Spleen (tissue), 13 donors: ENCODE measurements at regions of chr14 and their contacts with region 1.

Region 1: GRCh38 chr14:62126879-62127478 is 364.8 kb downstream of the SNAPC1 start:
- DNase-seq: no peak
- H3K4me3 ChIP-seq: no peak overlapping the region
- H3K27ac ChIP-seq: no peak overlapping the region
- H3K4me1 ChIP-seq: peaks cover 0 to 19% (median 0%) of the 10 kb centered on the region in 6 donors
- H3K27me3 ChIP-seq: peaks cover 0 to 8% (median 0%) of the 10 kb centered on the region in 7 donors
- CTCF ChIP-seq: peak; percentile 59 to 83 (median 75)
- POLR2A ChIP-seq: no peak

Region 2: GRCh38 chr14:61710853-61711817 is 415.8 kb before region 1 on chr14:
- intact Hi-C with region 1: no loop called
- DNase-seq: peak; percentile 69
- H3K4me3 ChIP-seq: peak overlapping the region in 1 of 8 donors; percentile 22
- H3K27ac ChIP-seq: peak overlapping the region in 6 of 8 donors; percentile 39 to 81 (median 72)
- H3K4me1 ChIP-seq: peaks cover 43 to 88% (median 80%) of the 10 kb centered on the region in 6 donors
- H3K27me3 ChIP-seq: no peaks in the 10 kb centered on the region
- CTCF ChIP-seq: no peak
- POLR2A ChIP-seq: no peak

Region 3: DNA sequence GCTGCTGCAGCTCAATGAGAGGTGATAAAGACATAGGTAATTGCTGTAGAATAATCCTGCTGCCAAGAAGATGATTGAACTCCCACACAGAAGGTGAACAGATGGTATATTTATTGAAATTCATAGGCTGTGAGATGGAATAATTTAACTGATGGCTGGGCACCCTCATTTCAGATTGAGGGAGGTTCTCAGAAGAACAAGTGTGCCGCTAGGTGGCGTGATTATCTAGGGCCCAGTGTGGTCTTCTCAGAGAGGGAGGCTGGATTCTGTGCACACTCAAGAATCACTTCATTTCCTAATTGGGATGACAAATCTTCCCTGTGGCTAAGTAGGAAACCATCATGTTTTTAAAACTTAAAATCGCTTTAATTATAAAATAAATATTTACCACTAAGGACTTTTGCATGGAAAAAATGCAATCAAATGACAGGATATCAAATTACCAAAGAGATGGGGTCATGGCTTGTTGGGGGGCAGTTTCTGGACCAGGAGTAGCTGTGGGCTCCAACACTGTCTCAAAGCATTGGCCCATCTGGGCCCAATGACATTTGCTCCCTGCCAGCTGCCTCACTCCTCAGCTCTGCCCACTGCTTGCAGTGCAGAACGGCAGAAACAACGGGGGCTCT is 232.4 kb before region 1 on chr14:
- intact Hi-C with region 1: loop called (anchors 10 kb)
- DNase-seq: peak; percentile 81
- H3K4me3 ChIP-seq: no peak overlapping the region
- H3K27ac ChIP-seq: no peak overlapping the region
- H3K4me1 ChIP-seq: peaks cover 0 to 27% (median 7%) of the 10 kb centered on the region in 6 donors
- H3K27me3 ChIP-seq: no peaks in the 10 kb centered on the region
- CTCF ChIP-seq: peak; percentile 23 to 71 (median 58)
- POLR2A ChIP-seq: no peak

Region 4: DNA sequence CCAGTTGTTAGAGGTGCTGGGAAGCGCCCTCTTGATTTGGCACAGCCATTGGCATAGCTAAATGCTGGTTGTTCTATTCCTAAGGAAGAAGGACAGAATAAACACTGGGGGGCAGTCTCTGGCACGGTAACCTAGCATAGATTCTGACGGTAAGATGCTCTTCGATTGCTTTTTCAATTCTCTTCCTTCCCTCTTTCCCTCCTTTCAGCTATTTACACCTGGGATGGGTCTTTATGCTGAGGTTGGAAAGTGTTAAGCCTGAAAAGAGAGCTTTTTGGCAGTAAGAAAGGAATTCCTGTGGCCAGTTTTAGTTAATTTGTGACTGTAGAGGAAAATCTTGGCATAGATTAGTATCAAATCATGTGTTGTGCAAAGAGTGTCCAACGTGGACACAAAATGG is 201.9 kb before region 1 on chr14:
- intact Hi-C with region 1: loop called (anchors 10 kb)
- DNase-seq: no peak
- H3K4me3 ChIP-seq: no peak overlapping the region
- H3K27ac ChIP-seq: no peak overlapping the region
- H3K4me1 ChIP-seq: peaks cover 0 to 8% (median 0%) of the 10 kb centered on the region in 6 donors
- H3K27me3 ChIP-seq: no peaks in the 10 kb centered on the region
- CTCF ChIP-seq: peak in 9 of 11 experiments; percentile 15 to 61 (median 38)
- POLR2A ChIP-seq: no peak